ENCODE measurements at regions of chr9 and their contacts with region 1.

Region 1: GRCh38 chr9:87336914-87337333 is 160.7 kb upstream of the DAPK1 start:
- DNase-seq: peak; percentile 38
- H3K4me3 ChIP-seq: no peak overlapping the region; the same call in none of the 2 replicates
- H3K27ac ChIP-seq: no peak overlapping the region
- H3K27me3 ChIP-seq: peaks cover 8% of the 10 kb centered on the region
- CTCF ChIP-seq: peak; percentile 67

Region 2: GRCh38 chr9:87662808-87663528 is 326.0 kb after region 1 on chr9:
- CTCF ChIA-PET with region 1: interaction called, 22 read pairs
- POLR2A ChIA-PET with region 1: no interaction called
- DNase-seq: no peak
- H3K4me3 ChIP-seq: no peak overlapping the region
- H3K27ac ChIP-seq: no peak overlapping the region
- H3K27me3 ChIP-seq: no peaks in the 10 kb centered on the region
- CTCF ChIP-seq: peak; percentile 75